ENCODE measurements at regions of chr19 and their contacts with region 1.

Region 1: DNA sequence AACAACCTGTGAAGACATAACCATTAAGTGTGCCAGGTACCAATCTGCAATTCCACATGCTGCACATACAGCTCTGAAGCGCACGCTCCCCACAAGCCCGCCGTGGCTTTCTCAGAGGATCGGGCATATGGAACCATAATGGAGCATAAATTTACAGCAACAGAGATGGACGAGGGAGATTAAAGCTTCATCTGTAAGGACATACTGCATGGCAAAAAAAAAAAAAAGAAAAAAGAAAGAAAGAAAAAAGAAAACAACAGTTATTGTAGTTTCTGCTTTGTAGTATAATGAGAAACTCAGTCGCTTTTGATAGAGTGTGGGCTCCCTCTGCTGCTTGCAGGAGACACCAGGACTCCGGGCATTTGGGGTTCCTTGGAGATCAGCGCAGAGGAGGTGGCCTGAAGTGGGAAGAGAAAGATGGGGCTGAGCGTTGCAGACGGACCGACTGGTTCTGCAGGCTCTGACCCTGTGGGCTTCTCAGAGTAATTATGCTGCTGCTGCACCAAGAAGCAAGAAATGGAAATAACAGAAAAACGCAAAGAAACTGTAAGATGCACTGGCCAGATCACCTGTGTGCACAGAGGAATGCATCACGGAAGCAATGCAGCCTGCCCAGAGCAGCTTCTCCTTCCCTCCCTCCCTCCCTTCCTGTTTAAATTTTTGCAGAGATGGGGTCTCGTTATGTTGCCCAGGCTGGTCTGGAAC is 10.8 kb upstream of the PDCD5 start:
- DNase-seq: peak; percentile 54
- ATAC-seq: peak; percentile 51
- H3K4me3 ChIP-seq: no peak overlapping the region
- H3K4me3 Mint-ChIP-seq: no peak overlapping the region
- H3K27ac ChIP-seq: no peak overlapping the region
- H3K27ac Mint-ChIP-seq: no peak overlapping the region
- H3K4me1 ChIP-seq: no peaks in the 10 kb centered on the region
- H3K4me1 Mint-ChIP-seq: no peaks in the 10 kb centered on the region
- H3K27me3 ChIP-seq: peaks cover 0 to 7% (median 3%) of the 10 kb centered on the region in 4 experiments
- H3K27me3 Mint-ChIP-seq: peaks cover 18% of the 10 kb centered on the region
- CTCF ChIP-seq: peak; percentile 48

Region 2: DNA sequence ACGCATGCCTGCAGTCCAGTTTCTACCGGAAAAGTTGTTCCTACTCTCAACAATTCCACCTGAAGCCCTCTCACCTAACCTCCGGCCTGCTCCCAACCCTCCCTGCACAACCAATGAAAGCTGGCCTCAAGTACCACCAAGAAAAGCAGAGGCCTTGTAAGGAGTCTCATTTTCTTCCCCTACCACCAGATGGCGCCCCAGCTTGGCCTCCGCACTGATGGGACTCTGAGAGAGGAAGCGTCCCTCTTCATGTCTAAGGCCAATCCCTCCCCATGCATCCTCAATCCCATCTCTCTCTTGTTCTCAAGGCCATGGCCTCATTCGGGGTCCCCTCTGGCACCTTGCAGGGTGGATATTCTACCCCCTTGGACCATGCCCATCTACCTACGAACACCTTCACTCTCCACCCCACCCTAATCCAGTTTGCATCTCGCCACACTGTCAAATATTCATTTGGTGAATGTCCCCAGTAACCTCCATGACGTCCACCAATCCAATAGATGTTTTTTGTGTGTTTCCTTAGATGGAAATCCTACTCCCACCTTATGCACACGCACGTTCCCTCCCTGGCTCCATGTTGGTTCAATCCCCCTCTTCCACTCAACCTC is 1785.3 kb before region 1 on chr19:
- CTCF ChIA-PET with region 1: interaction called, 3 read pairs
- POLR2A ChIA-PET with region 1: no interaction called
- intact Hi-C with region 1: loop called (anchors 10 kb)
- DNase-seq: peak; percentile 29
- ATAC-seq: no peak
- H3K4me3 ChIP-seq: no peak overlapping the region
- H3K4me3 Mint-ChIP-seq: no peak overlapping the region
- H3K27ac ChIP-seq: no peak overlapping the region
- H3K27ac Mint-ChIP-seq: no peak overlapping the region
- H3K4me1 ChIP-seq: no peaks in the 10 kb centered on the region
- H3K4me1 Mint-ChIP-seq: no peaks in the 10 kb centered on the region
- H3K27me3 ChIP-seq: no peaks in the 10 kb centered on the region
- H3K27me3 Mint-ChIP-seq: no peaks in the 10 kb centered on the region
- CTCF ChIP-seq: peak; percentile 55

Region 3: GRCh38 chr19:32691291-32691951 is 121.2 kb after region 1 on chr19 and contains the start of gene NUDT19:
- CTCF ChIA-PET with region 1: no interaction called
- POLR2A ChIA-PET with region 1: no interaction called
- intact Hi-C with region 1: no loop called
- DNase-seq: peak; percentile 82
- ATAC-seq: peak; percentile 92
- H3K4me3 ChIP-seq: peak within 1 kb of the TSS; percentile 8 to 77 (median 66)
- H3K4me3 Mint-ChIP-seq: peak within 1 kb of the TSS; percentile 91
- H3K27ac ChIP-seq: peak within 1 kb of the TSS; percentile 37 to 70
- H3K27ac Mint-ChIP-seq: peak within 1 kb of the TSS; percentile 88
- H3K4me1 ChIP-seq: peaks cover 19 to 31% of the 10 kb centered on the region in 2 donors
- H3K4me1 Mint-ChIP-seq: peaks cover 45% of the 10 kb centered on the region
- H3K27me3 ChIP-seq: no peaks in the 10 kb centered on the region
- H3K27me3 Mint-ChIP-seq: no peaks in the 10 kb centered on the region
- CTCF ChIP-seq: no peak
- total RNA-seq, gene NUDT19: 7.1 and 8.9 TPM in 2 replicates